ENCODE measurements at regions of chr17 and their contacts with region 1.

Region 1: GRCh38 chr17:81702971-81703746 is at the start of gene MRPL12:
- DNase-seq: peak; percentile 74 to 94 (median 85)
- ATAC-seq: peak; percentile 87
- H3K4me3 ChIP-seq: peak within 1 kb of the TSS; percentile 93
- H3K4me3 Mint-ChIP-seq: peak within 1 kb of the TSS; percentile 94
- H3K27ac ChIP-seq: peak within 1 kb of the TSS; percentile 94
- H3K27ac Mint-ChIP-seq: peak within 1 kb of the TSS; percentile 97
- H3K4me1 ChIP-seq: peaks cover 39% of the 10 kb centered on the region
- H3K4me1 Mint-ChIP-seq: peaks cover 27% of the 10 kb centered on the region
- H3K27me3 ChIP-seq: no peaks in the 10 kb centered on the region
- H3K27me3 Mint-ChIP-seq: no peaks in the 10 kb centered on the region
- CTCF ChIP-seq: peak; percentile 12
- total RNA-seq, gene MRPL12: 26.2 to 26.5 TPM

Region 2: GRCh38 chr17:81636505-81637288 is 66.5 kb before region 1 on chr17 and contains the starts of genes NPLOC4 and TSPAN10:
- CTCF ChIA-PET with region 1: no interaction called
- POLR2A ChIA-PET with region 1: interaction called, 4 read pairs
- intact Hi-C with region 1: loop called in 1 of 2 experiments (anchors 2 kb)
- DNase-seq: peak; percentile 58 to 93 (median 79)
- ATAC-seq: peak; percentile 89
- H3K4me3 ChIP-seq: peak within 1 kb of the TSS; percentile 94
- H3K4me3 Mint-ChIP-seq: peak within 1 kb of the TSS; percentile 97
- H3K27ac ChIP-seq: peak within 1 kb of the TSS; percentile 23 to 29
- H3K27ac Mint-ChIP-seq: peak within 1 kb of the TSS; percentile 86
- H3K4me1 ChIP-seq: peaks cover 37% of the 10 kb centered on the region
- H3K4me1 Mint-ChIP-seq: peaks cover 18% of the 10 kb centered on the region
- H3K27me3 ChIP-seq: no peaks in the 10 kb centered on the region
- H3K27me3 Mint-ChIP-seq: no peaks in the 10 kb centered on the region
- CTCF ChIP-seq: no peak
- total RNA-seq, gene NPLOC4: 61.0 to 62.4 TPM
- total RNA-seq, gene TSPAN10: 0.17 TPM in 1 of 2 experiments, not detected in the other

Region 3: GRCh38 chr17:81666342-81667191 is 36.6 kb before region 1 on chr17 and contains the starts of genes CCDC137 and OXLD1:
- CTCF ChIA-PET with region 1: no interaction called
- POLR2A ChIA-PET with region 1: interaction called, 9 read pairs
- intact Hi-C with region 1: loop called in 1 of 2 experiments (anchors 5 kb)
- DNase-seq: peak; percentile 81 to 96 (median 91)
- ATAC-seq: peak; percentile 84
- H3K4me3 ChIP-seq: peak within 1 kb of the TSS; percentile 90
- H3K4me3 Mint-ChIP-seq: peak within 1 kb of the TSS; percentile 97
- H3K27ac ChIP-seq: peak within 1 kb of the TSS; percentile 73 to 85
- H3K27ac Mint-ChIP-seq: peak within 1 kb of the TSS; percentile 91
- H3K4me1 ChIP-seq: peaks cover 67% of the 10 kb centered on the region
- H3K4me1 Mint-ChIP-seq: peaks cover 50% of the 10 kb centered on the region
- H3K27me3 ChIP-seq: no peaks in the 10 kb centered on the region
- H3K27me3 Mint-ChIP-seq: no peaks in the 10 kb centered on the region
- CTCF ChIP-seq: no peak
- total RNA-seq, gene CCDC137: 20.8 to 21.7 TPM
- total RNA-seq, gene OXLD1: 24.6 to 25.3 TPM

Region 4: DNA sequence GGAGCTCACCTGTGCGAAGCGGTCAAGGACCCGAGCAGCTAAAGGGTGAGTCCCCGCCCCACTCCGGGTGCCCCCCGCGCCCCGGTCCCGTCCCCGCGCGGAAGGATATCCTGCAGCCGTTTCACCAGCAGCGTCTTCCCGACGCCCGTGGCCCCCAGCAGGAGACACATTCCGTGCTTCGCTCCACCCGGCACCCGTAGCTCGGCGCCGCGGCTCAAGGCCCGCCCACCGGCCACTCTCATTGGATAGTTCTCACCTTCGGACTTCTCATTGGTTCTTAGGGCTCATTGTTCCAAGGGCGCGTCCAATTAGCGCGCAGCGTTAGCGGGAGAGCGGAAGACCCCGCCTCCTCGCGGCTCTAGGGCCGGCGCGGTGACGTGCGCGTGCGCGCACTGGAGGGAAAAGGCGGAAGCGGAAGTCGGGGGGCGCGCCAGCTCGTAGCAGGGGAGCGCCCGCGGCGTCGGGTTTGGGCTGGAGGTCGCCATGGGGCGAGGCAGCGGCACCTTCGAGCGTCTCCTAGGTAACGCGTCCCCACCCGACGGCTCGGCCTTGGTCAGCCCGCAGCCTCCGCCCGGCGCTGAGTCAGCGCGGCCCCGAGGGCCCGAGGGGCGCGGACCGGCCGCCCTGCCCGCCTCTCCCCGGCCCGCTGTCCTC is 19.4 kb before region 1 on chr17 and contains the starts of genes ARL16 and HGS:
- CTCF ChIA-PET with region 1: interaction called, 5 read pairs
- POLR2A ChIA-PET with region 1: interaction called, 43 read pairs
- intact Hi-C with region 1: loop called in 1 of 2 experiments (anchors 2 kb)
- DNase-seq: peak; percentile 94 to 99 (median 96)
- ATAC-seq: peak; percentile 99
- H3K4me3 ChIP-seq: peak within 1 kb of the TSS; percentile 98
- H3K4me3 Mint-ChIP-seq: peak within 1 kb of the TSS; percentile 100
- H3K27ac ChIP-seq: peak within 1 kb of the TSS; percentile 67 to 69
- H3K27ac Mint-ChIP-seq: peak within 1 kb of the TSS; percentile 81
- H3K4me1 ChIP-seq: peaks cover 51% of the 10 kb centered on the region
- H3K4me1 Mint-ChIP-seq: peaks cover 24% of the 10 kb centered on the region
- H3K27me3 ChIP-seq: no peaks in the 10 kb centered on the region
- H3K27me3 Mint-ChIP-seq: no peaks in the 10 kb centered on the region
- CTCF ChIP-seq: no peak
- total RNA-seq, gene ARL16: 35.7 to 38.5 TPM
- total RNA-seq, gene HGS: 118 to 127 TPM

Region 5: DNA sequence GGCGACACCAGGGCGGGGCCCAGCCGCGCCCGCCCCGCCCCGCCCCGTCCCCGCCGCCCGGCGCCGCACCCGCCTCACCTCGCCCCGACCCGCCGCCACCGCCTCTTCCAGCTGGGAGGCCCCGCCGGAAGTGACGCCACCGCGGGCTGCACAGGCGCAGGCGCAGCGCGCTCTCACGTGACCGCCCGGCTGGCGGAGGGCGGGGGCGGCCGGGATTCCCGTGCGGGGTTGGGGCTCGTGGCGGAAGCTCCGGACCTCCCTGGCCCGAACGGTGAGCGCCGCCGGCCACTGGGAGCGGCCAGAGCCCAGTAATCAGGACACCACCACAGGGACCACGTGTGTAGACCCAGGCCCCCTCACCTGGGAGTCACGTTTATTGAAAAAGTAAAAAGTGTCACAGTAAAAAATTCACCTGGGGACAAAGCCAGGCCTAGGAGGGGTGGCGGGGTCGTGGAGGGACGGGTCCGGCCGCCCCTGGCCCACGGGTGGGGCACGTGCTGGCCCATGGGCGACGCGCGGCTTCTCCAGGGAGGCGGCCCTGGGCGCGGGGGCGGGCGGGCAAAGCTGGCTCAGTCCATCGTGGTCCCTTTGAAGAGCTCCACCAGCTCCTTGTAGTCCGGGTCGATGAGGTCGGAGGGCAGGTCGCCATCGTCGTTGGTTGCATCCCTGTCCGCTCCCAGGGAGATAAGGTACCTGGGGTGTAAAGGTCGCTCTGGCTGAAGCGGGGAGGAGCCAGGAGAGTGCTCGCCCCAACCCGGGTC is 130.2 kb after region 1 on chr17 and contains the start of gene MCRIP1:
- CTCF ChIA-PET with region 1: no interaction called
- POLR2A ChIA-PET with region 1: interaction called, 13 read pairs
- intact Hi-C with region 1: no loop called
- DNase-seq: peak; percentile 82 to 98 (median 92)
- ATAC-seq: peak; percentile 78
- H3K4me3 ChIP-seq: peak within 1 kb of the TSS; percentile 80
- H3K4me3 Mint-ChIP-seq: peak within 1 kb of the TSS; percentile 93
- H3K27ac ChIP-seq: peak within 1 kb of the TSS; percentile 72 to 91
- H3K27ac Mint-ChIP-seq: peak within 1 kb of the TSS; percentile 88
- H3K4me1 ChIP-seq: peaks cover 28% of the 10 kb centered on the region
- H3K4me1 Mint-ChIP-seq: peaks cover 19% of the 10 kb centered on the region
- H3K27me3 ChIP-seq: no peaks in the 10 kb centered on the region
- H3K27me3 Mint-ChIP-seq: no peaks in the 10 kb centered on the region
- CTCF ChIP-seq: no peak
- total RNA-seq, gene MCRIP1: 36.9 to 37.7 TPM

Region 6: DNA sequence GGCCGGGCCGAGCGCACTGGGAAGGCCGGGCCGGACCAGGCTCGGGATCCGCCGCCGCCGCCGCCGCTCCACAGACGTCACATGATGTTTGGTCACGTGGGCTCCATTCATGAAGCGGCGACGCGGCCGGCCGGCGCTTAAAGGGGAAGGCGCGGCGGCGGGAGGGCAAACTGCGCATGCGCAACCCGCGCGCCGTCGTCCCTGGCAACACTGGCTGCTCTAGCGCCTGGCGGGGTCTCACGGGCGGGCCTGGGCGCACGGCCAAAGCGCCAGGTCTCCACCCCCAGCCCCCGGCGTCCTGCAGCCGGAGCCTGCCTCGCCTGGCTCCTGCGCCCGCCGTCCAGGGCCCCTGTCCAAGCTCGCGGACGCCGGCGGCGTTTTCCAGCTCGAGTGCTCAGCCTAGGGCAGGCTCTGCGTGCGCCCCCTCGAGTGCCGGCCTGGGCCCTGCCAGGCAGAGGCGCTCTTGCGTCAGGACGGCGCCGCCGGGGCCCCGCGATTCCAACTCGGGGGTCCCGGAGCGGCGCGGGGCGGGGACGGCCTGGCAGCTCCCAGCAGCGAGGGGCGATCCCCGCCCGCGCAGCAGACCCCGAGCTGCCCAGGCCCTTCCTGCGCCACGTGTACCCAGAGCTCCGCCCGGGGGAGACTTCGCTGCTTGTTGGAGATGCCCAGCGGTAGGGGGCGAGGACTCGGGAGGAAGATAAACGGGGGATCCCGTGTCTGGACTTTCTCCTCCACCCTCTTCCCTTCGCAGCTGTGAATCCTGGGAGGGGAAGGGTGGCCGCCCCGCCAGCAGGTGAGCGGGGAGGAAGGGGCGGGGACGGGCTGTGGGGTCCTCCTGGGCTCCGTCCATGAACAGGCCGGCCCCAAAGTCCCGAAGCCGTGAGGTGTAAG is 224.7 kb after region 1 on chr17 and contains the start of gene MAFG:
- CTCF ChIA-PET with region 1: no interaction called
- POLR2A ChIA-PET with region 1: interaction called, 3 read pairs
- intact Hi-C with region 1: loop called in 1 of 2 experiments (anchors 5 kb)
- DNase-seq: peak; percentile 78 to 97 (median 87)
- ATAC-seq: peak; percentile 58
- H3K4me3 ChIP-seq: peak within 1 kb of the TSS; percentile 61
- H3K4me3 Mint-ChIP-seq: peak within 1 kb of the TSS; percentile 88
- H3K27ac ChIP-seq: peak within 1 kb of the TSS; percentile 54 to 65
- H3K27ac Mint-ChIP-seq: peak within 1 kb of the TSS; percentile 88
- H3K4me1 ChIP-seq: peaks cover 51% of the 10 kb centered on the region
- H3K4me1 Mint-ChIP-seq: peaks cover 20% of the 10 kb centered on the region
- H3K27me3 ChIP-seq: peaks cover 19% of the 10 kb centered on the region in 2 experiments
- H3K27me3 Mint-ChIP-seq: peaks cover 16% of the 10 kb centered on the region
- CTCF ChIP-seq: no peak
- total RNA-seq, gene MAFG: 10.8 to 13.3 TPM

Measured in CD4-positive, alpha-beta T cell (primary cell).